Colonic mucosa (tissue), 4 donors: ENCODE measurements at regions of chr1 and their contacts with region 1.

Region 1: DNA sequence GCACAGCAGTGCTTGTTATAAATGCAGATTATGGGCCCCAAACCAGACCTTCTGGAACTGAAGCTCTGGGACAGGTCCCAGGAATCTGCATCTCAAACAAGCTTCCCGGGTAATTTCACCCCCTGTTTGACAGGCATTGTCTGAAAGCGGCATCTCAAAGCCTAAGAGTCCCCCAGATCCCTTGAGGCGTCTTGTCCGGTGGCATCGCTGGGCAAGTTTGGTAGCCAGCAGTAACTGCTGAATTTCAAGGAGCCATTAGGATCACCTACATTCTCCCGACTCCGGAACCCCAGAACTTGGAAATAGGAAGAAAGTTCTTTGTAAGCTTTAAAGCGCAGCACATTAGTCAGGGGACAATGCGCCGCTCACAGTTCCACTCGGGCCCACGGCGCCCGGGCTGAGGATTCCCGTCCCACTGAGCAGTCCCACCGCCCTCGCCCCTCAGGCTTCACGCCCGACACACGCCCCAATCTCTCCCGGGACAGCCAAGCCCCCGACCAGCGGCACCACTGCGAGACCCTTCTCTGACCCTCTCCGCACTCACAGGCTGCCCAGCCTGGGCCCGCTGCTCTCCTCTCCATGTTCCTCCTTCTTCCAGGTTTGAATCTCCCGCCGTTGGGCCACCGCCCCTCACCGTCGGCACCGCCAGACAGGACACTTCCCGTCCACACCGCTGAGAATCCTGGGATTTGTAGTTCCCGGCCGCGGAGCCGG is at the start of gene IQGAP3:
- DNase-seq: peak; percentile 94
- H3K4me3 ChIP-seq: peak within 1 kb of the TSS; percentile 54
- H3K27ac ChIP-seq: peak within 1 kb of the TSS; percentile 66
- H3K4me1 ChIP-seq: peaks cover 5% of the 10 kb centered on the region
- H3K27me3 ChIP-seq: no peaks in the 10 kb centered on the region
- CTCF ChIP-seq: no peak
- total RNA-seq, gene IQGAP3: 13.6 to 57.9 TPM

Region 2: GRCh38 chr1:156510709-156511108 is 61.4 kb before region 1 on chr1:
- intact Hi-C with region 1: loop called (anchors 5 kb)
- DNase-seq: peak; percentile 51
- H3K4me3 ChIP-seq: no peak overlapping the region
- H3K27ac ChIP-seq: no peak overlapping the region
- H3K4me1 ChIP-seq: peaks cover 3% of the 10 kb centered on the region
- H3K27me3 ChIP-seq: no peaks in the 10 kb centered on the region
- CTCF ChIP-seq: no peak

Region 3: GRCh38 chr1:156728597-156729462 is 156.7 kb after region 1 on chr1 and contains the start of gene ISG20L2:
- intact Hi-C with region 1: no loop called
- DNase-seq: peak; percentile 96
- H3K4me3 ChIP-seq: peak within 1 kb of the TSS; percentile 89
- H3K27ac ChIP-seq: peak within 1 kb of the TSS; percentile 91
- H3K4me1 ChIP-seq: peaks cover 28% of the 10 kb centered on the region
- H3K27me3 ChIP-seq: no peaks in the 10 kb centered on the region
- CTCF ChIP-seq: no peak
- total RNA-seq, gene ISG20L2: 23.4 to 30.0 TPM

Region 4: GRCh38 chr1:156860113-156860627 is 288.1 kb after region 1 on chr1:
- intact Hi-C with region 1: no loop called
- DNase-seq: peak; percentile 49
- H3K4me3 ChIP-seq: peak overlapping the region; percentile 27
- H3K27ac ChIP-seq: no peak overlapping the region
- H3K4me1 ChIP-seq: peaks cover 7% of the 10 kb centered on the region
- H3K27me3 ChIP-seq: peaks cover 43% of the 10 kb centered on the region
- CTCF ChIP-seq: peak; percentile 86